ENCODE measurements at regions of chr1 and their contacts with region 1.

Region 1: GRCh38 chr1:78607334-78607927 is 12.8 kb upstream of the IFI44L start:
- DNase-seq: peak in 1 of 2 donors; percentile 52
- H3K4me3 ChIP-seq: no peak overlapping the region
- H3K27ac ChIP-seq: no peak overlapping the region
- H3K4me1 ChIP-seq: peaks cover 0 to 10% (median 4%) of the 10 kb centered on the region in 4 donors
- H3K27me3 ChIP-seq: no peaks in the 10 kb centered on the region
- CTCF ChIP-seq: peak in 5 of 7 experiments; percentile 15 to 66 (median 45)
- EP300 ChIP-seq: no peak
- POLR2A ChIP-seq: no peak

Region 2: GRCh38 chr1:78132174-78132947 is 475.1 kb before region 1 on chr1:
- intact Hi-C with region 1: loop called (anchors 5 kb)
- DNase-seq: no peak
- H3K4me3 ChIP-seq: no peak overlapping the region
- H3K27ac ChIP-seq: no peak overlapping the region
- H3K4me1 ChIP-seq: no peaks in the 10 kb centered on the region
- H3K27me3 ChIP-seq: no peaks in the 10 kb centered on the region
- CTCF ChIP-seq: no peak
- EP300 ChIP-seq: no peak
- POLR2A ChIP-seq: no peak

Region 3: GRCh38 chr1:78743626-78744025 is 136.2 kb after region 1 on chr1:
- intact Hi-C with region 1: no loop called
- DNase-seq: no peak
- H3K4me3 ChIP-seq: no peak overlapping the region
- H3K27ac ChIP-seq: no peak overlapping the region
- H3K4me1 ChIP-seq: no peaks in the 10 kb centered on the region
- H3K27me3 ChIP-seq: no peaks in the 10 kb centered on the region
- CTCF ChIP-seq: no peak
- EP300 ChIP-seq: no peak
- POLR2A ChIP-seq: no peak

Region 4: DNA sequence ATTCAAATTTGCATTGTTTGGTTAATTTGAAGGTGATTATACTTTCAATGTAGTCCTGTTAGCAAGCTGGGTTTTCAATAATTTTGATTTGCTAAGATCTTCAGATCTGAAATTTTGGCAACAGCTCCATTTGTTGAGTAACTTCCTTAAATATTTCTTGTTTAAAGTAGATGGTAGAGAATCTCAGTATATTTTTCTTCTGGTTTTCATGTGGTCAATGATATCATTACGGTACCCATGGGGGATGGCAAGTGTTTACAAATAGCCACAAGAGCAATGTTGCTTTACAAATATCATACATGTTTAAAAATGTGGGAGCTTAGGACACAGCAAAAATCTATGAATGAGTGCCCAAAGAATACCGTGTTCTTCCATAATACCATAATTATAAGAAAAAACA is 218.1 kb after region 1 on chr1:
- intact Hi-C with region 1: no loop called
- DNase-seq: no peak
- H3K4me3 ChIP-seq: no peak overlapping the region
- H3K27ac ChIP-seq: no peak overlapping the region
- H3K4me1 ChIP-seq: no peaks in the 10 kb centered on the region
- H3K27me3 ChIP-seq: no peaks in the 10 kb centered on the region
- CTCF ChIP-seq: no peak
- EP300 ChIP-seq: no peak
- POLR2A ChIP-seq: no peak